ENCODE measurements at regions of chr3 and their contacts with region 1.

Region 1: GRCh38 chr3:17841190-17841828 is 98.9 kb upstream of the TBC1D5 start:
- DNase-seq: peak; percentile 85

Region 2: GRCh38 chr3:17645072-17645698 is 196.1 kb before region 1 on chr3:
- CTCF ChIA-PET with region 1: interaction called, 19 read pairs
- POLR2A ChIA-PET with region 1: no interaction called
- DNase-seq: peak; percentile 49

Region 3: GRCh38 chr3:17687566-17687965 is 153.7 kb before region 1 on chr3:
- CTCF ChIA-PET with region 1: interaction called, 18 read pairs
- POLR2A ChIA-PET with region 1: no interaction called
- DNase-seq: no peak